ENCODE measurements at regions of chrX and their contacts with region 1.

Region 1: DNA sequence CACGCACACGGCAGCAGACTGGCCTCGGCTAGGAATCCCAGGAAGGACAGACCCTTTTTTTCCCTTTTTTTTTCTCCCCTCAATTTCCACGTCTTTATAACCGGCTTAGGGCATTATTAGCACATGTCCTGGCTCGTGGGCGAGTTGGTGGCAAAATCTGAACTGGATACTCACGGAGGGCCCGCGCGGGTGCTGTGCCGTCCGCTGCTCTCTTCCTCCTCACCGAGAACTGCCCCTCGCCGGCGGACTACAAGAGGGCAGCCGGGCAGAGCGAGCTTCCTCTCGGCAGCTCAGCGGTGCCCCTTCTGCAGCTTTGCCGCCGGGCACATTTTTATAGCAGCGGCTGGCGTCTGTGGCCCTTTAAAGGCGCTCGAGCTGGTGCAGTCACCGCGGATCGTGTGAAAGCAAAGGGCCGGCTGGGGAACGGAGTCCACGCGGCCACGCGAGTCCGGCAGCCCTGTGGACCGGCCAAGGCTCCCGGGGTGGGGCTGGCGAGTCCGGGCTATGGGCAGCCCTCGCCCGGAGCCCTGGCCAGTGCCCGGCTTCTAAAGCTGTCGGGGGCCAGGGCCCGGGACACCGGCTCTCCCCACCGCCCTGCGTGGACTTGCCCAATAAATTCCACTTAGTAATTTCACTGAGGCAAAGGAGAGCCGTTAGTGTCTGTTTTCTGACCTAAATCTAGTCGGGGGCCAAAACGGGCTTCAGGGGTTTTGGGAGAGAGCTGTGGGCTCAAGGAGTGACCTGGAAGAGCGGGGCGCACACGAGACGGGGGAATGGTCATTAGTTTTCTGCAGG is 1.3 kb upstream of the CITED1 start:
- DNase-seq: peak in 9 of 10 donors; percentile 27 to 66 (median 61)
- H3K4me3 ChIP-seq: peak overlapping the region; percentile 27 to 73 (median 55)
- H3K27ac ChIP-seq: peak overlapping the region in 7 of 59 donors; percentile 18 to 61 (median 40)
- H3K27me3 ChIP-seq: peaks cover 0 to 96% (median 65%) of the 10 kb centered on the region in 45 donors
- CTCF ChIP-seq: no peak

Region 2: DNA sequence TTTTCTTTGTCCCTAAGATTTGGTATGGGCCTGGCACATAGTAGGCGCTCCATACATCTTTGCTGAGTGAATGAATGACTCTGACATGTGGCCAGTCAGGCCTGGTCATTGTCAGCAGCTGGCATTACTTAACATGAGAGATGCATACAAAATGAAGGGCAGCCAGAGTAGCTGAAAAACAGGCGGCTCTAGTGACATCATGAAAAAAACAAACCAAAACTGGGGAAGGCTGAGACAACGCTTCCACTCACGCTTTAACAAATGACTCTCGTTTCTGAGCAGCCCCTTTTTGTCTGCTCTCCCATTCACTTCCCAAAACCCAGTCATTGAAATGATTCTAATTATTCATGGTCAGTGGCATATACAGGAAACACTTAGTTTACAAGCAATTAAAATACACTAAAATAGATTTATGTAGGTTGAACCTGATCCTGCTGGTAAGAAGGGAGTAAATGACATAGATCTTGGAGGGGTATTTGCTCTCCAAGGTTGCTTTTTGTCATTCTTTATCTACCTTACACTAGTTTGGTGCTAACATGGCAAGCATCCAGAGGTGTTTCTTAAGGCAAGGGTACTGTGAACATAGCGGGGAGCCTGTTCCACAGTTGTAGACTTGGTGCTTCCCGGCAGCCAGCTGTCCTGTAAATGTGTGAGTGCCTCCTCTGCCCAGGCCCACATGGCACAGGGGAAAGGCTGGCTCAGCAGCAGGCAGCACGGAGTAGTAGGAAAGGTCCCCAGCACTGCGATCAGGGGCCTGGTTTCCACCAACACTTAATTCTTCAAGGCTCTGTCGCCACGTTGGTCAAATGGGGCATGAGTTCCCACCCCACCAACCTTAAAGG is 59.8 kb after region 1 on chrX:
- intact Hi-C with region 1: loop called in 1 of 2 experiments (anchors 10 kb)
- DNase-seq: no peak
- H3K4me3 ChIP-seq: no peak overlapping the region
- H3K27ac ChIP-seq: peak overlapping the region in 4 of 59 donors; percentile 18 to 29 (median 22)
- H3K27me3 ChIP-seq: peaks cover 0 to 82% (median 16%) of the 10 kb centered on the region in 45 donors
- CTCF ChIP-seq: no peak

Region 3: DNA sequence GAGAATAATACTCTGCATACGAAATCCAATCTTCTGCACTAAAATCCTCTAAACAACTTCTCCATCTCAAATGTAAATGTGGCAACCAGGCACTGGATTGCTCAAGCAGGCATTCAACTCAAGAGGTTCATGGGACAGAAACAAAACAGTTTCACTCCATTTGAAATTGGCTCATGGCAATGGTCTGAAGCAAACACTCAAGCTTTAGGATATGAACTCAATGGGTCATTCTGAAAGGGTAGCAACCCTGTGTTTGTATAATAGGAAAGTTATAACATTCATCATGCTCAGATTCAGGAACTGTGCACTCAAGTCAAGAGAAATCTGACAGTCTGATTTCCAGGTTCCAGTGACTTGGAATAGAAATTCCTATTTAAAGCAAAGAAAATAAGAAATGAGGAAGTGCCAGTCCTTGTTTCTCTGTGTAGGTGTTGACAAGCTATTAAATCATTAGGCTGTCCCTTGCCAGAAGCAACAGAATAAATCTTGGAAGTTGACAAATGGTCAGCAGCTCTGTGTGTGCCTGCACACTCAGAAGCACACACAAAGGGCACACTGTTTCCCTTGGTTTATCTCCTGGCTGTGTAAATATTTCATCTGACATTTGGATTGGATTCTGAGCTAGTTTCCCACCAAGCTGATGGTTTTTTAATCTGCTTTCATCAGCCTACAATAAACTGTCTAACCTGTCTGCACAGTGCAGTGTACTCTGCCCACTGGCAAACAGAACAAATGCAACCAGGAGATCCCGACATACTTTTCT is 74.6 kb after region 1 on chrX:
- intact Hi-C with region 1: loop called in 1 of 2 experiments (anchors 5 kb)
- DNase-seq: no peak
- H3K4me3 ChIP-seq: no peak overlapping the region
- H3K27ac ChIP-seq: peak overlapping the region in 7 of 59 donors; percentile 7 to 47 (median 18)
- H3K27me3 ChIP-seq: peaks cover 0 to 76% (median 7%) of the 10 kb centered on the region in 45 donors
- CTCF ChIP-seq: no peak

Region 4: DNA sequence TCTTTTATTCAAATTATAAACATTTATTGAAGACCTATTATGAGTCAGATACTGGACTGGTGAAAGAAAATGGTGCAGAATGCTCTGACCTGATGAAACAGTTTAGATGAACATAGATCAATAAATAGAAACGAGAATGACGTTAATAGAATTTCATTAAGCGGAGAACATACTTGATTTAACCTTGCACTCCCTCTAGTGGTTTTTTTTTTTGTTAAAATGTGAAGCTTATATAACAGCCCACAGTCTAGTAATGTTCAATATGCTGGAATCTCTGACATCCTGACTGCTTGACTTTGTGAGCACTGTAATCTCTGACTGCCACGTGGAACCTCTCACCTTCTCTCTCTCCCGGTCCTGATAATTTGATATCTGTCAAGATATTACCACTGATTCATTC is 233.3 kb after region 1 on chrX:
- intact Hi-C with region 1: loop called in 1 of 2 experiments (anchors 10 kb)
- DNase-seq: no peak
- H3K4me3 ChIP-seq: no peak overlapping the region
- H3K27ac ChIP-seq: no peak overlapping the region
- H3K27me3 ChIP-seq: peaks cover 0 to 74% (median 9%) of the 10 kb centered on the region in 45 donors
- CTCF ChIP-seq: peak in 54 of 56 donors; percentile 16 to 72 (median 49)